ENCODE measurements at regions of chr1 and their contacts with region 1.

Region 1: GRCh38 chr1:197775282-197776262 is at the start of gene DENND1B:
- DNase-seq: peak; percentile 94
- H3K4me3 ChIP-seq: peak within 1 kb of the TSS; percentile 73 to 85 (median 74)
- H3K27ac ChIP-seq: peak within 1 kb of the TSS; percentile 84 to 90 (median 88)
- H3K4me1 ChIP-seq: peaks cover 10 to 36% (median 31%) of the 10 kb centered on the region in 4 donors
- H3K27me3 ChIP-seq: no peaks in the 10 kb centered on the region
- CTCF ChIP-seq: peak in 1 of 3 experiments; percentile 21
- EP300 ChIP-seq: no peak
- POLR2A ChIP-seq: no peak
- total RNA-seq, gene DENND1B: 6.4 to 11.3 (median 9.1) TPM

Region 2: DNA sequence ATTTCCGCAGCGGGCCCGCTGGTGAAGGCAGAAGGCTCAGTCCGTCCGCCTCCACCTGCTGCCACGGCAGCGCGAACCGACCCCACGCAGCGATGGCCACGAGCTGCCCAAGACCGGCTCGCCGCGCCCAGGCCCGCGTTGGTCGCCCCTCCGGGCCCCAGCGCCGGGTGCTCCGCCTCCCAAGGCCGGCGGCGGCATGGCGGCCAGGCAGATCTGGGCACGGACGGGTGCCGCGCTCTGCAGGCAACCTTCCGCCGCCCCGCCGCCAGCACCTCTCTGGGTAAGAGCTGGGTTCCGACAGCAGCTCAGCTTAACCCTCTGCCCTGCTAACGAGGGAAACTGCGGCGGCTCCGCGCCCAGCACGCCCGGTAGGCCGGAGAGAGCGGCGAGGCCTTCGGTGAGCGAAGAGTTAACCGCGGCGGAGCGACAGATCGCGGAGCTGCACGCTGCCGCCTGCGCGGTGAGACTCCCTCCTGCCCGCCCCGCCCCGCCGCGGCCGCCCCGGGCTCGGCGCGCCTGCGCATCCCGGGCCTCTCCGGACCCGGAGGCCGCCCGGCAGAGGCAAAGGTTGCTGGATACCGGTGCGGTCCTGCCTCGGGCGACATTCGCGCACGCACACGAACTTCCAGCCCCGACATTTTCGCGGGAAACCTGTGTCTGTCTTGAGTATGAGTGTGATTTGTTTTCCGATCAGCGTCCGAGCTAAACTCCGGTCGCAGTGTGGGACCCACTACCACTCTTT is 127.1 kb after region 1 on chr1 and contains the start of gene C1orf53:
- intact Hi-C with region 1: loop called (anchors 10 kb)
- DNase-seq: no peak
- H3K4me3 ChIP-seq: peak within 1 kb of the TSS; percentile 75 to 81 (median 79)
- H3K27ac ChIP-seq: peak within 1 kb of the TSS; percentile 83 to 88 (median 88)
- H3K4me1 ChIP-seq: peaks cover 5 to 16% (median 10%) of the 10 kb centered on the region in 4 donors
- H3K27me3 ChIP-seq: peaks cover 0 to 32% (median 9%) of the 10 kb centered on the region in 4 donors
- CTCF ChIP-seq: peak in 1 of 3 experiments; percentile 11
- EP300 ChIP-seq: no peak
- POLR2A ChIP-seq: no peak
- total RNA-seq, gene C1orf53: 0.83 to 5.4 TPM in 2 of 4 donors, not detected in the others